CD4-positive, alpha-beta T cell (primary cell): ENCODE measurements at regions of chr16 and their contacts with region 1.

Region 1: DNA sequence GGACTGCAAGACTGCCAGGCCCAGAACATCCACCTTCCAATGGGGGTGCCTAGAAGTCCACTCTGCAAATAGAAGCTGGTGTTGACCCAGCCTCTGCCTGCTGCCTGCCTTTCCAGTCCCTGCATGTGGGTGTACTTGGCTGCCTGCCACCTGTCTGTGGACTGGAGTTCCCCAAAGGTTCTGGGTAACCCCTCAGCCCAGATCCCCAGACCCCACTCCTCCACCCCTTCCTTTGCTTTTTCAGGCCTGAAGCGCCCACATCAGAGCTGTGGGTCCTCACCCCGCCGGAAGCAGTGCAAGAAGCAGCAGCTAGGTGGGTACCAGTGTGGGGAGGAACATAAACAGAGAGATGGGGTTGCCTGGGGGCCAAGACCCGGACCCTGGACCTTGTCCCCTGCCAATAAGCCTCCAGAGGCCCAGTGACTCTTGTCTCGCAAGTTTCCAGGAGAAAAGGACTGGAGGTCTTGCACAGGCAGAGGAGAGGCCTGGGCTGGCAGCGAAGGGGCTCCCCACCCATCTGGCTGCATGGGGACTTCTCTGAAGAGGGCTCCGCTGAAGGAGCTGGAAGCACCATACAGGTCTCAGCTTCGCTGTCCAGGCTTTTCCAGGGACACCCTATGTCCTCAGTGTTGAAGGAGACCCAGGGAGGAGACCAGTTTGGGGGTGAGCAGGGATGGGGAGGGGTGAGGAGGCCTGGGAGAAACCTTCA is 34.3 kb downstream of the NLRC5 start:
- DNase-seq: peak; percentile 44 to 93 (median 68)
- ATAC-seq: peak; percentile 89
- H3K4me3 ChIP-seq: peak overlapping the region; percentile 17
- H3K4me3 Mint-ChIP-seq: peak overlapping the region; percentile 27
- H3K27ac ChIP-seq: peak overlapping the region; percentile 23 to 69
- H3K27ac Mint-ChIP-seq: peak overlapping the region; percentile 84
- H3K4me1 ChIP-seq: peaks cover 93% of the 10 kb centered on the region
- H3K4me1 Mint-ChIP-seq: peaks cover 92% of the 10 kb centered on the region
- H3K27me3 ChIP-seq: no peaks in the 10 kb centered on the region
- H3K27me3 Mint-ChIP-seq: no peaks in the 10 kb centered on the region
- CTCF ChIP-seq: no peak

Region 2: DNA sequence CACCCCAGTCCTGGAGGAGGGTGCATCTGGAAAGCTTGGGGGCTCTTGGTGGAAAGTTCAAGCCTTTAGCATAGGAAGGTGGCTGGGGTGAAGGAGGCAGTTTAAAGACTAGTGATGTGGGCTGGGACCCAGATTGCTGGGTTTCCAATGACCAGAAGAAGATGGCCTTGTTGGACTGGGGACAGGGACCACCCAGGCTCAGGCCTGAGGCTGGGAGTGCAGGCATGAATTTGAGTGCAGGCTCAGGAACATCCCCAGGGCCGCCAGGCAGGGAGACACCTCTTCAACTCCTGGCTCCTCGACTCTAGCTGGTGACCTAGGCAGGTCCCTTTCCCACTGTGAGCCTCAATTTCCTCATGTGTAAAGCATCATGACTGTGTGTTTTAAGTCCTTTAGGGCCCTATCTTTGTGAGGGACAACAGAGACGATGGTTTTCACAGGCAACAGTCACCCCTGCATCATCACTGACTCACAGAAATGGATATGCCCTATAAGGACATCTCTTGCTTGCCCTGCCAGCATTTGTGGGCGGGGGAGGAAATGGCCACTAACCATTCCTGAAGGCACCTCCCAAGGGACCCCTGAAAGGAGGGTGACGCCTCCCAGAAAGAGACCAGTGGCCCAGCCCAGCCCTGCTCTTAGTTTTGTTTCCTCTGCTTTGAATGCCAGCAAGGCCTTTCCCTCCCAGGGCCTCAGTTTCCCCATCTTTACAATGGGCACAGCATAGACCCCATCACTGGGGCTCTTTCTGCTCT is 23.2 kb before region 1 on chr16:
- CTCF ChIA-PET with region 1: interaction called, 4 read pairs
- POLR2A ChIA-PET with region 1: interaction called, 30 read pairs
- intact Hi-C with region 1: no loop called
- DNase-seq: peak in 5 of 14 experiments; percentile 30 to 61 (median 45)
- ATAC-seq: peak; percentile 54
- H3K4me3 ChIP-seq: peak overlapping the region; percentile 32
- H3K4me3 Mint-ChIP-seq: peak overlapping the region; percentile 27
- H3K27ac ChIP-seq: peak overlapping the region; percentile 69 to 88
- H3K27ac Mint-ChIP-seq: peak overlapping the region; percentile 96
- H3K4me1 ChIP-seq: peaks cover 89% of the 10 kb centered on the region
- H3K4me1 Mint-ChIP-seq: peaks cover 96% of the 10 kb centered on the region
- H3K27me3 ChIP-seq: no peaks in the 10 kb centered on the region
- H3K27me3 Mint-ChIP-seq: no peaks in the 10 kb centered on the region
- CTCF ChIP-seq: no peak

Region 3: GRCh38 chr16:57045694-57046381 is 22.1 kb after region 1 on chr16:
- CTCF ChIA-PET with region 1: interaction called, 10 read pairs
- POLR2A ChIA-PET with region 1: interaction called, 55 read pairs
- intact Hi-C with region 1: no loop called
- DNase-seq: peak in 10 of 14 experiments; percentile 22 to 60 (median 38)
- ATAC-seq: no peak
- H3K4me3 ChIP-seq: no peak overlapping the region
- H3K4me3 Mint-ChIP-seq: no peak overlapping the region
- H3K27ac ChIP-seq: peak overlapping the region; percentile 32 to 44
- H3K27ac Mint-ChIP-seq: peak overlapping the region; percentile 85
- H3K4me1 ChIP-seq: peaks cover 60% of the 10 kb centered on the region
- H3K4me1 Mint-ChIP-seq: peaks cover 50% of the 10 kb centered on the region
- H3K27me3 ChIP-seq: no peaks in the 10 kb centered on the region
- H3K27me3 Mint-ChIP-seq: no peaks in the 10 kb centered on the region
- CTCF ChIP-seq: peak; percentile 42

Region 4: GRCh38 chr16:57224651-57225335 is 201.1 kb after region 1 on chr16:
- CTCF ChIA-PET with region 1: no interaction called
- POLR2A ChIA-PET with region 1: no interaction called
- intact Hi-C with region 1: no loop called
- DNase-seq: no peak
- ATAC-seq: no peak
- H3K4me3 ChIP-seq: no peak overlapping the region
- H3K4me3 Mint-ChIP-seq: no peak overlapping the region
- H3K27ac ChIP-seq: no peak overlapping the region
- H3K27ac Mint-ChIP-seq: no peak overlapping the region
- H3K4me1 ChIP-seq: no peaks in the 10 kb centered on the region
- H3K4me1 Mint-ChIP-seq: no peaks in the 10 kb centered on the region
- H3K27me3 ChIP-seq: no peaks in the 10 kb centered on the region
- H3K27me3 Mint-ChIP-seq: no peaks in the 10 kb centered on the region
- CTCF ChIP-seq: no peak